HCT116 (cell line): ENCODE measurements at regions of chr1 and their contacts with region 1.

Region 1: DNA sequence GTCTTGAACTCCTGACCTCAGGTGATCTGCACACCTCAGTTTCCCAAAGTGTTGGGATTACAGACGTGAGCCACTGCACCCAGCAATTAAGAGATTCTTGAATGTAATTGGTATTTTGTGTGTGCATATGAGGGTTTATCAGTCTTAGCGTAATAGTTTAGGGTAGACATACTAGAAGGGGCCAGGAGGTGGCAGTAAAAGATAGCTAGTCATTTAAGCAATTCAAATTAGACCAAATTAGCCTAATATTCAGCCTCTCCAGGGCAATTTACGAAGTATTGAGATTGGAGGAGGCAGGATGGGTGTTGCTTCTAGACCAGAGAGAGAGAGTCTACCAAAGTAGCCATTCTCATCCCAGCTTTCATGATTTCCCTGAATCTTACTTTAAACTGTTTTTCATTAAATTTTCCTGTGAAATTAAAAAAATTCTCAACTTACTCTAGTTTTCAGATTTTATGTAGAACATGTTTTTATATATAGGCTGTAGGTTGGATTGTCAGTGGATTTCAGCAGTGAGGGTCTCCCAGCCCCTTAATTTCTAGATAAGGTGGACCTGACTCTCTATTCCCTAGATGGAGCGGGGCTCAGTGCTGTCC is 119.7 kb downstream of the HHAT start:
- DNase-seq: peak; percentile 33
- ATAC-seq: peak; percentile 87
- H3K4me3 ChIP-seq: no peak overlapping the region
- H3K27ac ChIP-seq: no peak overlapping the region
- H3K4me1 ChIP-seq: peaks cover 4% of the 10 kb centered on the region in 2 experiments; a peak in 2 of 4 replicates
- H3K27me3 ChIP-seq: peaks cover 34% of the 10 kb centered on the region
- CTCF ChIP-seq: peak; percentile 56 to 73 (median 59); a peak in 5 of 6 replicates
- POLR2A ChIP-seq: no peak
- RAD21 ChIP-seq: peak; percentile 79

Region 2: GRCh38 chr1:210377731-210378333 is 70.6 kb before region 1 on chr1:
- CTCF ChIA-PET with region 1: no interaction called
- POLR2A ChIA-PET with region 1: no interaction called
- RAD21 ChIA-PET with region 1: no interaction called
- intact Hi-C with region 1: no loop called
- DNase-seq: no peak
- ATAC-seq: no peak
- H3K4me3 ChIP-seq: no peak overlapping the region
- H3K27ac ChIP-seq: no peak overlapping the region
- H3K4me1 ChIP-seq: peaks cover 0 to 33% of the 10 kb centered on the region in 2 experiments; a peak in 3 of 4 replicates
- H3K27me3 ChIP-seq: no peaks in the 10 kb centered on the region
- CTCF ChIP-seq: no peak
- POLR2A ChIP-seq: no peak
- RAD21 ChIP-seq: no peak

Region 3: GRCh38 chr1:210465150-210465549 is 16.8 kb after region 1 on chr1:
- CTCF ChIA-PET with region 1: no interaction called
- POLR2A ChIA-PET with region 1: no interaction called
- RAD21 ChIA-PET with region 1: no interaction called
- intact Hi-C with region 1: no loop called
- DNase-seq: no peak
- ATAC-seq: no peak
- H3K4me3 ChIP-seq: no peak overlapping the region
- H3K27ac ChIP-seq: no peak overlapping the region
- H3K4me1 ChIP-seq: no peaks in the 10 kb centered on the region
- H3K27me3 ChIP-seq: peaks cover 10% of the 10 kb centered on the region; the same call in 1 of the 2 replicates
- CTCF ChIP-seq: no peak
- POLR2A ChIP-seq: no peak
- RAD21 ChIP-seq: no peak

Region 4: GRCh38 chr1:210505601-210506496 is 57.5 kb after region 1 on chr1:
- CTCF ChIA-PET with region 1: no interaction called
- POLR2A ChIA-PET with region 1: no interaction called
- RAD21 ChIA-PET with region 1: no interaction called
- intact Hi-C with region 1: no loop called
- DNase-seq: no peak
- ATAC-seq: no peak
- H3K4me3 ChIP-seq: no peak overlapping the region
- H3K27ac ChIP-seq: no peak overlapping the region
- H3K4me1 ChIP-seq: no peaks in the 10 kb centered on the region
- H3K27me3 ChIP-seq: peaks cover 6% of the 10 kb centered on the region; the same call in 1 of the 2 replicates
- CTCF ChIP-seq: no peak
- POLR2A ChIP-seq: no peak
- RAD21 ChIP-seq: no peak

Region 5: GRCh38 chr1:210568631-210569030 is 120.2 kb after region 1 on chr1:
- CTCF ChIA-PET with region 1: no interaction called
- POLR2A ChIA-PET with region 1: no interaction called
- RAD21 ChIA-PET with region 1: no interaction called
- intact Hi-C with region 1: no loop called
- DNase-seq: no peak
- ATAC-seq: no peak
- H3K4me3 ChIP-seq: no peak overlapping the region
- H3K27ac ChIP-seq: no peak overlapping the region
- H3K4me1 ChIP-seq: no peaks in the 10 kb centered on the region
- H3K27me3 ChIP-seq: peaks cover 25% of the 10 kb centered on the region; the same call in 1 of the 2 replicates
- CTCF ChIP-seq: no peak
- POLR2A ChIP-seq: no peak
- RAD21 ChIP-seq: no peak

Region 6: GRCh38 chr1:210951279-210951678 is 502.9 kb after region 1 on chr1:
- CTCF ChIA-PET with region 1: interaction called, 4 read pairs
- POLR2A ChIA-PET with region 1: no interaction called
- RAD21 ChIA-PET with region 1: no interaction called
- intact Hi-C with region 1: loop called (anchors 5 kb)
- DNase-seq: no peak
- ATAC-seq: no peak
- H3K4me3 ChIP-seq: no peak overlapping the region
- H3K27ac ChIP-seq: no peak overlapping the region
- H3K4me1 ChIP-seq: no peaks in the 10 kb centered on the region
- H3K27me3 ChIP-seq: peaks cover 13% of the 10 kb centered on the region; the same call in 1 of the 2 replicates
- CTCF ChIP-seq: no peak
- POLR2A ChIP-seq: no peak
- RAD21 ChIP-seq: no peak